CD4-positive, alpha-beta memory T cell (primary cell): ENCODE measurements at regions of chr14 and their contacts with region 1.

Region 1: DNA sequence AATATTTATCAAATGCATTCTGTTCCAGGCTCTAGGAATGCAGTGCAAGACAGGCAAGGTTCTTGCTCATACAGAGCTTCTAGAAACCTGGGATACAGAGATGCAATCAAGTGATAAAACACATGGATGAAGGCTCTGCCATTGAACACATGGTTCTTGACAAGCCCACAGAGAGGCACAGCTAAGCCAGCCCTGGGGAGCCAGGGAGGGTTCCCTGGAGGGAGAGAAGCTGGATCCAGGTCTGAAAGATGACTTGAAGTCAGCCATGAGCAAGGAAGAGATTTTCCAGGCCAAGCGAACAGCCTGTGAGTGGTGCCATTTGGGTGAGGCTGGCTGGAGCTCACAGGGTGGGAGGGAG is 66.2 kb downstream of the IRF2BPL start:
- DNase-seq: no peak
- H3K4me3 ChIP-seq: peak overlapping the region; percentile 48 to 61
- H3K4me3 Mint-ChIP-seq: peak overlapping the region; percentile 73 to 93 (median 86)
- H3K27ac ChIP-seq: peak overlapping the region; percentile 81
- H3K27ac Mint-ChIP-seq: peak overlapping the region; percentile 87 to 100 (median 97)
- H3K4me1 ChIP-seq: peaks cover 78% of the 10 kb centered on the region
- H3K4me1 Mint-ChIP-seq: peaks cover 50 to 79% (median 63%) of the 10 kb centered on the region in 4 donors
- H3K27me3 ChIP-seq: no peaks in the 10 kb centered on the region
- H3K27me3 Mint-ChIP-seq: no peaks in the 10 kb centered on the region

Region 2: GRCh38 chr14:76947078-76947837 is 15.0 kb before region 1 on chr14:
- CTCF ChIA-PET with region 1: interaction called, 13 read pairs
- POLR2A ChIA-PET with region 1: interaction called, 20 read pairs
- intact Hi-C with region 1: loop called (anchors 2 kb)
- DNase-seq: peak; percentile 68 to 82 (median 72)
- H3K4me3 ChIP-seq: peak overlapping the region in 1 of 2 donors; percentile 19
- H3K4me3 Mint-ChIP-seq: peak overlapping the region in 7 of 8 donors; percentile 4 to 65 (median 57)
- H3K27ac ChIP-seq: peak overlapping the region; percentile 33
- H3K27ac Mint-ChIP-seq: peak overlapping the region; percentile 37 to 93 (median 87)
- H3K4me1 ChIP-seq: peaks cover 20% of the 10 kb centered on the region
- H3K4me1 Mint-ChIP-seq: peaks cover 16 to 39% (median 24%) of the 10 kb centered on the region in 4 donors
- H3K27me3 ChIP-seq: no peaks in the 10 kb centered on the region
- H3K27me3 Mint-ChIP-seq: no peaks in the 10 kb centered on the region

Region 3: DNA sequence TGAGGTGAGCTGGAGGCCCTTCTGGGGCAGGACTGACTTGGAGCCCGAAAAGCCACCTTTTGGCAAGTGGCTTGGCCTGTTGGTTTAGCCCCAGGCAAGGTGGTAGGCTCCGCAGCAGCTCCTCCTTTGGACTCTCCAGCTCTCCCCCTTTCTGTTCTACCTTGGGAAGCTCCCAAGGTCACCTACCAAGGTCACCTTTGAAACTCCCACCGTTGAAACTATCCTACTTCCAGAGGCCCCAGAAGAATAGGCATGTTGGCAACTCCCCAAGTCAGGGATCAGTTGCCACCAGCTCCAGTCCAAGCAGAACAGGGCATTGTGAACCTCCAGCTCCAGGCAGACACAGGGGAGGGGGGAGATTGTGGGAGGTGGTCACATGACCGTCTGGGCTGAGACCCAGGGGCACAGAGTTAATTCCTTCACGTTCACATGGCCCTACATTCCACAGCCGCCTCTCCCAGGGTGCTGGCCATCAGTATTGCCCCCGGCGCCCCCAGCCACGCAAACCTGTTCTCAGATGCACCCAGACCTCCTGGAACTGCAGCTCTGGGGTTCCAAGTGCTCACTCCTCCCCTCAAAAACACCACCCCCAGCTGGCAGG is 51.8 kb after region 1 on chr14:
- CTCF ChIA-PET with region 1: interaction called, 4 read pairs
- POLR2A ChIA-PET with region 1: interaction called, 15 read pairs
- intact Hi-C with region 1: no loop called
- DNase-seq: no peak
- H3K4me3 ChIP-seq: no peak overlapping the region
- H3K4me3 Mint-ChIP-seq: no peak overlapping the region
- H3K27ac ChIP-seq: no peak overlapping the region
- H3K27ac Mint-ChIP-seq: peak overlapping the region in 1 of 7 donors; percentile 47
- H3K4me1 ChIP-seq: peaks cover 15% of the 10 kb centered on the region
- H3K4me1 Mint-ChIP-seq: peaks cover 16 to 25% (median 19%) of the 10 kb centered on the region in 4 donors
- H3K27me3 ChIP-seq: no peaks in the 10 kb centered on the region
- H3K27me3 Mint-ChIP-seq: no peaks in the 10 kb centered on the region

Region 4: GRCh38 chr14:77028384-77029231 is 66.3 kb after region 1 on chr14 and contains the start of gene IRF2BPL:
- CTCF ChIA-PET with region 1: interaction called, 18 read pairs
- POLR2A ChIA-PET with region 1: interaction called, 132 read pairs
- intact Hi-C with region 1: loop called (anchors 1 kb)
- DNase-seq: peak; percentile 95 to 96 (median 95)
- H3K4me3 ChIP-seq: peak within 1 kb of the TSS; percentile 57 to 80
- H3K4me3 Mint-ChIP-seq: peak within 1 kb of the TSS; percentile 93 to 97 (median 95)
- H3K27ac ChIP-seq: peak within 1 kb of the TSS; percentile 93
- H3K27ac Mint-ChIP-seq: peak within 1 kb of the TSS; percentile 97 to 100 (median 98)
- H3K4me1 ChIP-seq: peaks cover 77% of the 10 kb centered on the region
- H3K4me1 Mint-ChIP-seq: peaks cover 37 to 72% (median 52%) of the 10 kb centered on the region in 4 donors
- H3K27me3 ChIP-seq: no peaks in the 10 kb centered on the region
- H3K27me3 Mint-ChIP-seq: no peaks in the 10 kb centered on the region
- total RNA-seq, gene IRF2BPL: 36.6 to 37.7 TPM

Region 5: GRCh38 chr14:77040059-77040740 is 77.9 kb after region 1 on chr14:
- CTCF ChIA-PET with region 1: interaction called, 7 read pairs
- POLR2A ChIA-PET with region 1: interaction called, 64 read pairs
- intact Hi-C with region 1: loop called (anchors 1 kb)
- DNase-seq: peak; percentile 96 to 99 (median 99)
- H3K4me3 ChIP-seq: peak overlapping the region; percentile 8 to 53
- H3K4me3 Mint-ChIP-seq: peak overlapping the region; percentile 84 to 93 (median 86)
- H3K27ac ChIP-seq: peak overlapping the region; percentile 95
- H3K27ac Mint-ChIP-seq: peak overlapping the region; percentile 97 to 100 (median 99)
- H3K4me1 ChIP-seq: peaks cover 94% of the 10 kb centered on the region
- H3K4me1 Mint-ChIP-seq: peaks cover 50 to 97% (median 84%) of the 10 kb centered on the region in 4 donors
- H3K27me3 ChIP-seq: no peaks in the 10 kb centered on the region
- H3K27me3 Mint-ChIP-seq: no peaks in the 10 kb centered on the region

Region 6: GRCh38 chr14:77067632-77068514 is 105.6 kb after region 1 on chr14:
- CTCF ChIA-PET with region 1: interaction called, 11 read pairs
- POLR2A ChIA-PET with region 1: no interaction called
- intact Hi-C with region 1: no loop called
- DNase-seq: peak in 4 of 5 donors; percentile 45 to 63 (median 58)
- H3K4me3 ChIP-seq: no peak overlapping the region
- H3K4me3 Mint-ChIP-seq: no peak overlapping the region
- H3K27ac ChIP-seq: no peak overlapping the region
- H3K27ac Mint-ChIP-seq: no peak overlapping the region
- H3K4me1 ChIP-seq: no peaks in the 10 kb centered on the region
- H3K4me1 Mint-ChIP-seq: peaks cover 0 to 3% (median under 1%) of the 10 kb centered on the region in 4 donors
- H3K27me3 ChIP-seq: no peaks in the 10 kb centered on the region
- H3K27me3 Mint-ChIP-seq: peaks cover 0 to 4% of the 10 kb centered on the region in 2 donors